Heart right ventricle (tissue), 16 donors: ENCODE measurements at regions of chr10 and their contacts with region 1.

Region 1: GRCh38 chr10:10589540-10590303 is 427.9 kb upstream of the CELF2 start:
- DNase-seq: peak in 1 of 2 donors; percentile 54
- ATAC-seq: peak in 7 of 8 donors; percentile 38 to 77 (median 56)
- H3K4me3 ChIP-seq: no peak overlapping the region
- H3K27ac ChIP-seq: no peak overlapping the region
- H3K4me1 ChIP-seq: peaks cover 0 to 24% (median 10%) of the 10 kb centered on the region in 9 donors
- H3K27me3 ChIP-seq: no peaks in the 10 kb centered on the region
- CTCF ChIP-seq: no peak

Region 2: GRCh38 chr10:10213237-10213636 is 376.5 kb before region 1 on chr10:
- intact Hi-C with region 1: no loop called
- DNase-seq: no peak
- ATAC-seq: no peak
- H3K4me3 ChIP-seq: no peak overlapping the region
- H3K27ac ChIP-seq: no peak overlapping the region
- H3K4me1 ChIP-seq: peaks cover 0 to 9% (median 0%) of the 10 kb centered on the region in 9 donors
- H3K27me3 ChIP-seq: peaks cover 0 to 3% (median 0%) of the 10 kb centered on the region in 7 donors
- CTCF ChIP-seq: no peak

Region 3: GRCh38 chr10:10520491-10521385 is 69.0 kb before region 1 on chr10:
- intact Hi-C with region 1: no loop called
- DNase-seq: no peak
- ATAC-seq: no peak
- H3K4me3 ChIP-seq: no peak overlapping the region
- H3K27ac ChIP-seq: no peak overlapping the region
- H3K4me1 ChIP-seq: peaks cover 0 to 8% (median 0%) of the 10 kb centered on the region in 9 donors
- H3K27me3 ChIP-seq: no peaks in the 10 kb centered on the region
- CTCF ChIP-seq: no peak

Region 4: GRCh38 chr10:10564081-10564794 is 25.5 kb before region 1 on chr10:
- intact Hi-C with region 1: loop called in 1 of 10 experiments (anchors 1 kb)
- DNase-seq: peak in 1 of 2 donors; percentile 8
- ATAC-seq: peak in 1 of 8 donors; percentile 59
- H3K4me3 ChIP-seq: no peak overlapping the region
- H3K27ac ChIP-seq: no peak overlapping the region
- H3K4me1 ChIP-seq: peaks cover 0 to 29% (median 0%) of the 10 kb centered on the region in 9 donors
- H3K27me3 ChIP-seq: no peaks in the 10 kb centered on the region
- CTCF ChIP-seq: no peak

Region 5: DNA sequence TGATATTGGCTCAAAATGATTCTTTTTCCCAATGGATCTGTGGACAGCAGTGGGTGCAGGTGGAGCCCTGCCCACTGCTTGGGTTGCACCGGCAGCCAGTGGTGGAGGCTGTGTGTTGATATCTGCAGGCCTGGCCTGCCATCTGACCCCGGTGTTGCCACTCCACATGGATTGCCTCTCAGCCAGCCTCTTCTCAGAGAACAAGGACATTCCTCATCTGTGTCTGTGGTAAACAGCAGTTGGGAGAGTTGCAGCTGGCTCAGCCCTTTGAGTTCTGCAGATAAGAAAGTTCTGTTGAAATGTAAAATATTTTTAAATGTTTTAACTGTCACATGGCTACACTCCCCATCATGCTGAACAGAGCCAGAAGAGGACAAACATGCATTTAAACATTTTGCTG is 53.0 kb after region 1 on chr10:
- intact Hi-C with region 1: loop called in 1 of 10 experiments (anchors 5 kb)
- DNase-seq: peak; percentile 58 to 70
- ATAC-seq: peak; percentile 63 to 92 (median 82)
- H3K4me3 ChIP-seq: no peak overlapping the region
- H3K27ac ChIP-seq: peak overlapping the region; percentile 13 to 86 (median 78)
- H3K4me1 ChIP-seq: peaks cover 5 to 42% (median 32%) of the 10 kb centered on the region in 9 donors
- H3K27me3 ChIP-seq: no peaks in the 10 kb centered on the region
- CTCF ChIP-seq: no peak

Region 6: GRCh38 chr10:10658172-10658785 is 68.6 kb after region 1 on chr10:
- intact Hi-C with region 1: no loop called
- DNase-seq: no peak
- ATAC-seq: peak in 2 of 8 donors; percentile 16 to 44
- H3K4me3 ChIP-seq: no peak overlapping the region
- H3K27ac ChIP-seq: no peak overlapping the region
- H3K4me1 ChIP-seq: peaks cover 0 to 38% (median 0%) of the 10 kb centered on the region in 9 donors
- H3K27me3 ChIP-seq: no peaks in the 10 kb centered on the region
- CTCF ChIP-seq: no peak